Panc1 (cell line): ENCODE measurements at regions of chr3 and their contacts with region 1.

Region 1: DNA sequence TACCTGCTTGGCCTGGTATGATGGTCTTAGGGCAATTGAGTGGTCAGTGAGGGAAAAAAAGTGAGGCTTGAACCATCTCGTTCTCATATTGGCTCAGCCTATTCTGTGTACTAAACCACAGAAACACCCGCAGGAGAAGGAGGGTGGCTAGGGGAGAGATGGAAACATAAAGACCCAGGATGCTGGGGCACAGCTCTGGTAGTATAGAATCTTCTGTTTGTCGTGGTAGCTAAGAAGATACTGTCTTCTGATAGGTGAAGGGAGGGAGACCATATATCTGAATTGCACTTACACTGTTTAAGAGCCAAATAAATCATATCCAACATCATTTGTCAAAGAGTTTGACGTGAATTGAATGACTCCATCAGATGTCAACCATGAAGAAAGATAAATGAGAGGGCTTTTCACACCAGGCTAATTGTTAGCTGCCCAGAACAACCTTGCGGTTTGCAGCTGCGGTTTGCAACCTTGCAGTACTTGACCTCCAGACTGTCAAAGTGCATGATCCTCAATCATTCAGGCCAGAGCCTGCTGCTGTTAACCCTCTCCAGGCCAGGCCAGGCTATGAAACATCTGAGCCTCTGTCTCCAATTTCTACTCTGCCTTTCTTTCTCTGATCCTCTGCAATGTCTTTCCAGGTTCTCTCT is 40.9 kb upstream of the PIK3R4 start:
- DNase-seq: no peak
- ATAC-seq: no peak
- H3K4me3 ChIP-seq: no peak overlapping the region
- H3K27ac ChIP-seq: no peak overlapping the region
- H3K4me1 ChIP-seq: no peaks in the 10 kb centered on the region
- H3K27me3 ChIP-seq: peaks cover 2% of the 10 kb centered on the region; the same call in 1 of the 2 replicates
- CTCF ChIP-seq: no peak

Region 2: DNA sequence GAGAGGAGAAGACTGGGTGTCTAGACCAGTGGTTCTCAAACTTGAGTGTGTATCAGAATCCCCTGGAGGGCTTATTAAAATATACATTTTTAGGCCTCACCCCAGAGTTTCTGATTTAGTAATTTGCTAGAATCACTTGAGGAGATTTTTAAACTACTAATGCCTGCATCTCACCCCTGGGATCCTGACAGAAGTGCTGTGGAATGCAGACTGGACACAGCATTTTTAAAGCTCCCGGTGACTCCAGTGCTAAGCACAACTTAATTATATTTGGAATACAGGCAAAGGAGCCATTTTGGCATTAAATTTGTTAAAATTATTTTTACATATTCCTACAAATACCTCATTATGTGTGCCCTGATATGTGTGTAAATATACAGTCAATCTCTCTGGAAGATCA is 297.3 kb before region 1 on chr3:
- CTCF ChIA-PET with region 1: no interaction called
- POLR2A ChIA-PET with region 1: no interaction called
- in situ Hi-C with region 1: no loop called
- intact Hi-C with region 1: no loop called
- DNase-seq: no peak
- ATAC-seq: no peak
- H3K4me3 ChIP-seq: no peak overlapping the region
- H3K27ac ChIP-seq: no peak overlapping the region
- H3K4me1 ChIP-seq: no peaks in the 10 kb centered on the region
- H3K27me3 ChIP-seq: peaks cover 2% of the 10 kb centered on the region; the same call in 1 of the 2 replicates
- CTCF ChIP-seq: no peak

Region 3: GRCh38 chr3:130725746-130726145 is 61.8 kb before region 1 on chr3:
- CTCF ChIA-PET with region 1: no interaction called
- POLR2A ChIA-PET with region 1: interaction called, 17 read pairs
- in situ Hi-C with region 1: no loop called
- intact Hi-C with region 1: no loop called
- DNase-seq: no peak
- ATAC-seq: no peak
- H3K4me3 ChIP-seq: no peak overlapping the region
- H3K27ac ChIP-seq: no peak overlapping the region
- H3K4me1 ChIP-seq: no peaks in the 10 kb centered on the region
- H3K27me3 ChIP-seq: no peaks in the 10 kb centered on the region
- CTCF ChIP-seq: no peak

Region 4: DNA sequence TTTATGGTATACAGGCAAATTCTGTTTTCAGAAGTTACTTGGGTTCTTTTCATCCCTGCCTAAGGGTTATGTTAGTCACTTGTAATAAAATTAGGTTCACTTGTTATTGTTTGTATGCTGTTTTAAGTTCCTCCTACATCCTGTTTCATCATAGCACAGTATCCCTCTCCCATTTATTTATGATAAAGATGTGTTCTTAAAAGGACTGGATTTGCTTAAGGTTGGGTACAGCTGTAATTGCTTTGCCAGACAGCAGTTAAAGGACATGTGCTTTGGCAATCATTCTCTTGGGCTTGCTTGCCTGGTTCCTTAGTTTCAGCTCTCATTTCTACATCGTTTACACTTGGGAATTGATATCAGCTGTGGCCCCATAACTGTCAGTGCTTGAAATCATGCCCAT is 118.0 kb after region 1 on chr3:
- CTCF ChIA-PET with region 1: no interaction called
- POLR2A ChIA-PET with region 1: no interaction called
- in situ Hi-C with region 1: no loop called
- intact Hi-C with region 1: no loop called
- DNase-seq: no peak
- ATAC-seq: no peak
- H3K4me3 ChIP-seq: no peak overlapping the region
- H3K27ac ChIP-seq: peak overlapping the region; percentile 1; the same call in 1 of the 2 replicates
- H3K4me1 ChIP-seq: peaks cover 20% of the 10 kb centered on the region; the same call in 1 of the 2 replicates
- H3K27me3 ChIP-seq: no peaks in the 10 kb centered on the region
- CTCF ChIP-seq: no peak